ENCODE measurements at regions of chr5 and their contacts with region 1.

Region 1: GRCh38 chr5:96247097-96247701 is 185.8 kb downstream of the PCSK1 start:
- DNase-seq: peak; percentile 82 to 83
- H3K4me3 ChIP-seq: no peak overlapping the region
- H3K27ac ChIP-seq: peak overlapping the region; percentile 93 to 98 (median 95)
- H3K4me1 ChIP-seq: peaks cover 39 to 53% of the 10 kb centered on the region in 2 donors
- H3K27me3 ChIP-seq: no peaks in the 10 kb centered on the region
- CTCF ChIP-seq: no peak
- POLR2A ChIP-seq: peak in 1 of 2 donors; percentile 78

Region 2: GRCh38 chr5:96008987-96009647 is 238.1 kb before region 1 on chr5:
- intact Hi-C with region 1: no loop called
- DNase-seq: no peak
- H3K4me3 ChIP-seq: no peak overlapping the region
- H3K27ac ChIP-seq: no peak overlapping the region
- H3K4me1 ChIP-seq: no peaks in the 10 kb centered on the region
- H3K27me3 ChIP-seq: no peaks in the 10 kb centered on the region
- CTCF ChIP-seq: no peak
- POLR2A ChIP-seq: no peak

Region 3: DNA sequence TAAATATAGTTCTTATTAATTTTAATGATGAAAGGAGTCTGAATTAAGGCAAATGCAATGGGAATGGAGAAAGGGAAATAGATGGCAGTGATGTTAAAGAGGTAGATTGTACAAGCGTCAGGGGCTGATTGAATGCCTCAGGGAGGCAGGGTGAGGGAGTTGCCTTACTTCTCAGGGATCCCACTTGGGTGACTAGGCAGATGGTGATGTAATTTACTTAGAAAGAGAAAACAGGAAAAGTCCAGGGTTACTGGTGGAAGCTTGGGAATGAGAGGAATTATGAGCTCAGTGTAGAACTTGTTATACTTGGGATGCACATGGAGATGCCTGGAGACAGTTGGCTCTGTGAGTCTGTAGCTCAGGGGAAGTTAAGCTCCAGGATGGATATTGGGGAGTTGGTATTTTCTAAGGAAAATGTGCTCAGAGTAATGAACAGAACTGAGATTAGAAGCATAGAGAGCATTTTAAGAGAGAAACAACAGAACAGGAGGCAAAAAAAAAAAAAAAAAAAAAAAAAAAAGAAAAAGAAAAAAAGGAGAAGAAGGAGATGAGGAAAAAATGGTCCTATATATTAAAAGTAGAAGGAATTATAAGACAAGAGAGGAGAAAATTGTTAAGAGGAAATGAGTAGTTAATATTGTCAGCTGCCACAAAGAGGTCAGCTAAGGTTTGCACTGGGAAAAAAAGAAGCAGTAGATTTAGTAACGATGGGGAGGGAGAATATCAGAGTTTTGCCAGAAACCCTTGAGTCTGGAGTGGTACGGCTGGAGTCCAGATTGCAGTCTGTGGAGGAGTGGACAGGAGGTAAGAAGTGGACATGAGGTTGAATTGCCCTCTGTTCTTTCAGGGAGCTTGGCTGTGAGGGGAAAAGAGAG is 197.6 kb before region 1 on chr5:
- intact Hi-C with region 1: loop called (anchors 10 kb)
- DNase-seq: peak; percentile 82 to 85
- H3K4me3 ChIP-seq: no peak overlapping the region
- H3K27ac ChIP-seq: peak overlapping the region; percentile 71 to 96 (median 86)
- H3K4me1 ChIP-seq: peaks cover 26 to 38% of the 10 kb centered on the region in 2 donors
- H3K27me3 ChIP-seq: no peaks in the 10 kb centered on the region
- CTCF ChIP-seq: no peak
- POLR2A ChIP-seq: peak in 1 of 2 donors; percentile 44

Region 4: DNA sequence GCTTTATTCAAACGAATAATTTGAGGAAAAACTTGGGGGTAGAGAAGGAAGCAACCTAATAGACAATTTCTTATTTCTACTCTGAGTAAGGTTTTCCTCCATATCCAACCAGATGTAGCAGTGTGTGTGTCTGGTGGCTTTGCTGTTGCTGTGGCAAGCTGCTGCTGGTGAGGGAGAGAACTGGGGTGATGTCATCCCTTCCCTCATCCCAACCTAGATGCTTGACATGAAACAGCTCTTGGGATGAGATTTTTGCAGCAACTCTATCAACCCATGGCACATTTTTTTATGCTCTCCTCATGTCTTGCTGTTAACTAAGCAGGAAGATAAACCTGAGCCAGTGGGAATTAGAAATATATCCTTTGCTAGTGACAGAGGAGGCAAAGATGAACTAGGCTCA is 50.1 kb after region 1 on chr5:
- intact Hi-C with region 1: no loop called
- DNase-seq: no peak
- H3K4me3 ChIP-seq: no peak overlapping the region
- H3K27ac ChIP-seq: no peak overlapping the region
- H3K4me1 ChIP-seq: no peaks in the 10 kb centered on the region
- H3K27me3 ChIP-seq: no peaks in the 10 kb centered on the region
- CTCF ChIP-seq: no peak
- POLR2A ChIP-seq: no peak